ENCODE measurements at regions of chr6 and their contacts with region 1.

Region 1: GRCh38 chr6:82906951-82907350 is 158.7 kb downstream of the UBE3D start:
- DNase-seq: no peak
- ATAC-seq: no peak
- H3K4me3 Mint-ChIP-seq: no peak overlapping the region
- H3K27ac Mint-ChIP-seq: no peak overlapping the region
- H3K4me1 Mint-ChIP-seq: no peaks in the 10 kb centered on the region
- H3K27me3 Mint-ChIP-seq: no peaks in the 10 kb centered on the region

Region 2: GRCh38 chr6:82720992-82721391 is 186.0 kb before region 1 on chr6:
- CTCF ChIA-PET with region 1: no interaction called
- POLR2A ChIA-PET with region 1: no interaction called
- intact Hi-C with region 1: no loop called
- DNase-seq: no peak
- ATAC-seq: no peak
- H3K4me3 Mint-ChIP-seq: no peak overlapping the region
- H3K27ac Mint-ChIP-seq: no peak overlapping the region
- H3K4me1 Mint-ChIP-seq: no peaks in the 10 kb centered on the region
- H3K27me3 Mint-ChIP-seq: no peaks in the 10 kb centered on the region

Region 3: DNA sequence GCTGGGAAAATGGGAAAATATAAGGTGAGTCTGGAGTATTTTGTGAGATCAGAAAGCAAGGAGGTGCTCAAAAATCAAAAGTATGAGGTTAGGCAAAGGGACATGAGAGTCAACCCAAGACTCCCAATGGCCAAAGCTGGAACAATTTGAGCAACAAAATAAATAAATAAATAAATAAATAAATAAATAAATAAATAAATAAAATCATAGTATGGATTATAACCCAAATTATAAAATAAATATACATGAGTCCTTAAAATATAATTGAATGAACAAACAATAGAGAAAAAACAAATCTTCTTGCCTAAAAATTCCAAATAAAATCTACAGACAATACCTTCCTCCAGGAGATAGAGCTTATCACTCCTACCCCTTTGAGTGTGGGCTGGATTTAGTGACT is 89.2 kb after region 1 on chr6:
- CTCF ChIA-PET with region 1: no interaction called
- POLR2A ChIA-PET with region 1: interaction called, 18 read pairs
- intact Hi-C with region 1: loop called in 1 of 2 experiments (anchors 5 kb)
- DNase-seq: no peak
- ATAC-seq: no peak
- H3K4me3 Mint-ChIP-seq: no peak overlapping the region
- H3K27ac Mint-ChIP-seq: no peak overlapping the region
- H3K4me1 Mint-ChIP-seq: no peaks in the 10 kb centered on the region
- H3K27me3 Mint-ChIP-seq: no peaks in the 10 kb centered on the region

Region 4: GRCh38 chr6:83008663-83009062 is 101.7 kb after region 1 on chr6:
- CTCF ChIA-PET with region 1: no interaction called
- POLR2A ChIA-PET with region 1: no interaction called
- intact Hi-C with region 1: loop called in 1 of 2 experiments (anchors 5 kb)
- DNase-seq: no peak
- ATAC-seq: no peak
- H3K4me3 Mint-ChIP-seq: no peak overlapping the region
- H3K27ac Mint-ChIP-seq: no peak overlapping the region
- H3K4me1 Mint-ChIP-seq: peaks cover 11% of the 10 kb centered on the region
- H3K27me3 Mint-ChIP-seq: no peaks in the 10 kb centered on the region

Measured in activated CD4-positive, alpha-beta T cell treated with anti-CD3 and anti-CD28 coated beads for 36 hours (primary cell).